ENCODE measurements at regions of chr14 and their contacts with region 1.

Region 1: DNA sequence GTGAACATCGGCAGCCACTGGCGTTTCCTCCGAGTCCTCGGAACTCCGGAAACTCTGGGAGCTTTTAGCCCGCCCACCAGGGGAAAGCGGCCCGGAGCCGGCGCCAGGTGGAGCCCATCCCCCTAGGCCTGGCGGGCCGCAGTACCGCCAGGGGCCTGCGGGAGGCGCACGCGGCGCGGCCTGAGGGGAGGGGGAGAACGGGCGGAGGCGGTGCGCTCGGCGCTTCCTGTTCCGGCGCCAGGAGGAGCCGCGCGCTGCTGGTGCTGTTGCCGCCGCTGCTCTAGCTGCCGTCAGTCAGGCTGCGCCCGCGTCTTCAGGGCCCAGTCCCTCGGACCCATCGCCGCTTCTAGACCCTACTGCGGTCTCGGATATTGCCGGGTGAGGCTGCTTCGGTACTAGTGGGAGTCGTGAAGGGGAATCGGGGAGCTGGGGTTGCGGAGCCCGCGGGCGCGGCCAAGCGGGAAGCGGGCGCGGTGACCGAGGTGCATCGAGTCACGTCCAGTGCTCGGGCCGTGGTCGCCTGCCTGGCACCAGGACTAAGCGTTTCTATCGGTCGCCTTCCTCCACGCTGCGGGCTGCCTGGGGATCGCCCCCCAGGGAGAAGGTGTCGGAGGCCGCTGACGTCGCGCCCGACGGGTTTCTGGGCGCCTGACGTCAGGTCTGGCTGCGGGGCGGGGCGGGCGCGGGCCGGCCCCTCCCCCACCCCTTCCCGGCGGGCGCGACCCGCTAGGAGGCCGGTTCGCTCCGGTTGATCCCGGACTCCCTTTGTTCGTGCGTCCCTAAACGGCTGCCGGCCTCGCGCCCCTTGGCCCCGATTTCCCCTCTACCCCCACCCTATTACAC is at the start of gene MAPK1IP1L:
- DNase-seq: peak; percentile 94
- H3K4me3 Mint-ChIP-seq: peak within 1 kb of the TSS; percentile 82
- H3K27ac Mint-ChIP-seq: peak within 1 kb of the TSS; percentile 94
- H3K4me1 Mint-ChIP-seq: peaks cover 36% of the 10 kb centered on the region
- H3K27me3 Mint-ChIP-seq: no peaks in the 10 kb centered on the region
- total RNA-seq, gene MAPK1IP1L: 85.5 to 89.1 TPM

Region 2: DNA sequence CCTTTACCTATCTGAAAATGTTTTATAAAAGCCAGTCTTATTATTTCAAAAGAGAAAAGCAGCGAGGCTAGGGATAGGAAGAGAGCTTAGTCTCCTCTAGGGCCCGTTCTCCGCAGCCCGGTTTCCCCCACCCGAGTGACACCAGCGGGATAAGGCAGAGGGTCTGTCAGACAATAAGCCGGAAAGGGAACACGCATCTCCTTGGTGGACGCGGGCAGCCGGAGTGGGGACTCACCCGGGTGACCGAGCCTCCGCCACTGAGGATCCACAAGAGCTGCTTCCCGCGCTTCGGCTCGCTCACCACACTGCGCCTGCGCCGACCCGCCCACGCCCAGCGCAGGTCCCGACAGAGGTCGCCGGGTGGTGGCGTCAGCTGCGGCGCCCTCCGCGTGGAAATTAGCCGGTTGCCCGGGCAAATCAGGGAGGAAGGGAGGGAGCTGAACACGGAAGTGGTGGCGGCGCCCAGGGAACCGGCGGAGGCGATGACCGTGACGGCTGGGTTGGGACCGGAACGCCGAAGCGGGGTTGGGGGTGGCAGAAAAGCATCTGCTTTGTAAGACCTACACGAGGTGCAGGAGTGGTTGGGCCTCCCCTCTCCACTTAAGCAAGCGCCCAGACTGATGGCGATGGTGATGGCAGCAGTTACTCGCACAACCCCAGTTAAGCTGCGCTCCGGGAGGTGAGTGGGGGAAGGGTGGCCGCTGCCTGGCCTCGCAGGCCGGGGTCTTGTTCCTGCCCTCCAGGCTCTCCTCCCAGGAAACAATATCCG is 24.7 kb before region 1 on chr14 and contains the starts of genes SOCS4 and WDHD1:
- CTCF ChIA-PET with region 1: interaction called, 44 read pairs
- POLR2A ChIA-PET with region 1: interaction called, 48 read pairs
- intact Hi-C with region 1: loop called (anchors 1 kb)
- DNase-seq: peak; percentile 98
- H3K4me3 Mint-ChIP-seq: peak within 1 kb of the TSS; percentile 93
- H3K27ac Mint-ChIP-seq: peak within 1 kb of the TSS; percentile 89
- H3K4me1 Mint-ChIP-seq: peaks cover 44% of the 10 kb centered on the region
- H3K27me3 Mint-ChIP-seq: no peaks in the 10 kb centered on the region
- total RNA-seq, gene SOCS4: 24.4 to 25.3 TPM
- total RNA-seq, gene WDHD1: 62.4 to 63.2 TPM

Region 3: GRCh38 chr14:55071870-55072640 is 20.4 kb after region 1 on chr14:
- CTCF ChIA-PET with region 1: interaction called, 21 read pairs
- POLR2A ChIA-PET with region 1: interaction called, 28 read pairs
- intact Hi-C with region 1: loop called (anchors 1 kb)
- DNase-seq: peak; percentile 60
- H3K4me3 Mint-ChIP-seq: peak overlapping the region; percentile 20
- H3K27ac Mint-ChIP-seq: peak overlapping the region; percentile 76
- H3K4me1 Mint-ChIP-seq: peaks cover 40% of the 10 kb centered on the region
- H3K27me3 Mint-ChIP-seq: no peaks in the 10 kb centered on the region

Region 4: GRCh38 chr14:55077155-55077554 is 25.5 kb after region 1 on chr14:
- CTCF ChIA-PET with region 1: interaction called, 21 read pairs
- POLR2A ChIA-PET with region 1: interaction called, 28 read pairs
- intact Hi-C with region 1: loop called (anchors 1 kb)
- DNase-seq: peak; percentile 56
- H3K4me3 Mint-ChIP-seq: no peak overlapping the region
- H3K27ac Mint-ChIP-seq: no peak overlapping the region
- H3K4me1 Mint-ChIP-seq: peaks cover 30% of the 10 kb centered on the region
- H3K27me3 Mint-ChIP-seq: no peaks in the 10 kb centered on the region

Region 5: DNA sequence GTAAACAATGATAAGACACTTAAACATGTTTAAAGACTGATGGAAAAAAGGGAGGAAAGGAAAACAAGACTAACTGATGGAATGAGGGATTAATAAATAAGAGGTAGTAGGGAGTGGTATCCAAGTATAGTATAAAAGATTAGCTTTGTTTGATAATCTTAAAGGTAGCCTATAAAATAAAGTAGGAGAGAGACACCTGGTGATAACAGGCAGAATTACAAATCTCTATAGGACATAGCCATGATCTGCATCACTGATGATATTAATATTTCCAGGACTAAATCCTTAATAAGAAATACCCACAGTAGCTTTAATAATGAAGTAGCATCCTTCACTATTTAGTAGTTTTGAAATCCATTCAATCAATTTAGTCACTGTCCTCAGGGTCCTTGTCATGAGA is 109.3 kb after region 1 on chr14:
- CTCF ChIA-PET with region 1: interaction called, 15 read pairs
- POLR2A ChIA-PET with region 1: interaction called, 7 read pairs
- intact Hi-C with region 1: no loop called
- DNase-seq: no peak
- H3K4me3 Mint-ChIP-seq: no peak overlapping the region
- H3K27ac Mint-ChIP-seq: no peak overlapping the region
- H3K4me1 Mint-ChIP-seq: peaks cover 11% of the 10 kb centered on the region
- H3K27me3 Mint-ChIP-seq: no peaks in the 10 kb centered on the region

Measured in activated CD4-positive, alpha-beta memory T cell treated with anti-CD3 and anti-CD28 coated beads for 36 hours (primary cell).